ENCODE measurements at regions of chr11 and their contacts with region 1.

Region 1: DNA sequence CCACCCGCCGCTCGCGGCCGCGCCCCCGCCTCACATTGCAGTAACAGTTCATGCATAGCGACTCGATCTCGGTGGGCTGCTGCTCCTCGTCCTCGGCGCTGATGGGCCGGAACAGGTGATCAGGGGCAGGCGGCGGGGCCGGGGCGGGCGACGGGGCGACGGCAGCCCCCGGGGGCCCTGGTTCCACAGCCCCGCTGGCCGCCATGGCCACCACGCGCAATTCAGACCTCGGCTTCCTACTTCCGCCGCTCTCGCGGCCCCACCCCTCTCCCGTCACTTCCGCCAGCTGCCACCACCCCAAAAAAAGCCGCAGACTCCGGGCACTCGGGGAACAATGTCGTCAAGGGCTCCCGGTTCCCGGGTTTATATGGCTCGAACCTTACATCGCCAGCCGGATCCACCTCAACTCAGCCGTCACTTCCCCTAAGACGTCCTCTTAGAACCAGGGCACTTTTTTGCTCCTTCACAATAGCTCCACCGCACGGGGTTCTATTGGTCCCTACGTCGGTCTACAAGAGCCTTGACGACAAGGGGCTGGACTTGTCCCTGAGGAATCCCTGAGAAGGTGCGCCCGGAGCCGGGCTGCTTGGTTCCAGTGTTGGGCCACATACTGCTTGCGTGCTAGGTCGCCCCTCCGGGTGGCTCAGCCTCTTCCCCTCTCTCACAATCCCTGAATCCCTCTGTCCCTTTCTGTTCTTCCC is at the start of gene ZPR1:
- DNase-seq: peak; percentile 55
- H3K4me3 ChIP-seq: peak within 1 kb of the TSS; percentile 61 to 83 (median 81)
- H3K27ac ChIP-seq: peak within 1 kb of the TSS; percentile 75
- H3K4me1 ChIP-seq: peaks cover 14% of the 10 kb centered on the region
- H3K27me3 ChIP-seq: no peaks in the 10 kb centered on the region
- CTCF ChIP-seq: no peak
- total RNA-seq, gene ZPR1: 35.7 to 67.9 TPM

Region 2: DNA sequence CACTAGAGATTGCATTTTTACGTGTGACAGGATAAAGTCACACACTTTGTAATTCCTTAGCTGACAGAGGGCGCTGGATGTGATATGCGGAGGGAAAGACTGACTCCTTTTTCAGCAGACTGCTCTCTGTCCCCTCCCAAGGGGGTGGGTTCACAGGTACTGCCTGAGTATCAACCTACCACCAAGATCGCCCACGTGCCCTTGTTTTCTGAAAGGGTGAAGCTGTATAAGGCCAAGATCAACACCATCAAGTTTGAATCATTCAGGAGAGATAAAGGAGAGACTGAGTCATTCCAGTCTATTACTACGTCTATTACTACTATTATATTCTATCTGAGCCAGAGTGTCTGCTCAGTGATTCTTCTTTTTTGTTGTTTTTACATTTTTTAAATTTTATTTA is 45.8 kb before region 1 on chr11:
- CTCF ChIA-PET with region 1: no interaction called
- dilution Hi-C with region 1: no loop called
- in situ Hi-C with region 1: no loop called
- intact Hi-C with region 1: no loop called
- DNase-seq: no peak
- H3K4me3 ChIP-seq: no peak overlapping the region
- H3K27ac ChIP-seq: no peak overlapping the region
- H3K4me1 ChIP-seq: no peaks in the 10 kb centered on the region
- H3K27me3 ChIP-seq: no peaks in the 10 kb centered on the region
- CTCF ChIP-seq: no peak

Region 3: DNA sequence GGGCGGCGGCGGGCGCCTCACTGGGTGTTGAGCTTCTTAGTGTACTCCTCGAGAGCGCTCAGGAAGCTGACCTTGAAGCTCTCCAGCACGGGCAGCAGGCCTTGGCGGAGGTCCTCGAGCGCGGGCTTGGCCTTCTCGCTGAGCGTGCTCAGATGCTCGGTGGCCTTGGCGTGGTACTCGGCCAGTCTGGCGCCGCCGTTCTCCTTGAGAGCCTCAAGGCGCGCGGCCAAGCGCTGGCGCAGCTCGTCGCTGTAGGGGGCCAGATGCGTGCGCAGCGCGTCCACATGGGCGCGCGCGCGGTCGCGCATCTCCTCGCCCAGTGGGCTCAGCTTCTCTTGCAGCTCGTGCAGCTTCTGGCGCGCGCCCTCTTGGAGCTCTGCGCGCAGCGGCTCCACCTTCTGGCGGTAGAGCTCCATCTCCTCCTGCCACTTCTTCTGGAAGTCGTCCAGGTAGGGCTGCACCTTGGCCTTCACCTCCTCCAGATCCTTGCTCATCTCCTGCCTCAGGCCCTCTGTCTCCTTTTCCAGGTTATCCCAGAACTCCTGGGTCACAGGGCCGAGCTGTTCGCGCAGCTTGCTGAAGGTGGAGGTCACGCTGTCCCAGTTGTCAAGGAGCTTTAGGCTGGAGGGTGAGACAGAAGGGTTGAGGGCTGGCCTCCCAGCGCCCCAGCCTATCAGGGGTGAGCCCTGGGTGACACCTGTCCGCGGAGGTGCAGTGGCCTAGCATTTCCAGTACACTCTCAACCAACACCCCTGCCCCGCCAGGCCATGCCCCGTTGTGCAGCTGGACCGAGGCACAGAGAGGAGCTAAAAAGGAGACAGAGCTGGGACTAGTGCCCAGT is 48.1 kb after region 1 on chr11:
- CTCF ChIA-PET with region 1: interaction called, 26 read pairs
- dilution Hi-C with region 1: no loop called
- in situ Hi-C with region 1: no loop called
- intact Hi-C with region 1: loop called (anchors 1 kb)
- DNase-seq: peak; percentile 85
- H3K4me3 ChIP-seq: peak overlapping the region in 2 of 3 experiments; percentile 34 to 51
- H3K27ac ChIP-seq: no peak overlapping the region
- H3K4me1 ChIP-seq: peaks cover 8% of the 10 kb centered on the region
- H3K27me3 ChIP-seq: no peaks in the 10 kb centered on the region
- CTCF ChIP-seq: peak; percentile 58 to 74

Region 4: GRCh38 chr11:116853461-116854073 is 65.6 kb after region 1 on chr11:
- CTCF ChIA-PET with region 1: interaction called, 6 read pairs
- dilution Hi-C with region 1: no loop called
- in situ Hi-C with region 1: no loop called
- intact Hi-C with region 1: loop called (anchors 5 kb)
- DNase-seq: peak; percentile 96
- H3K4me3 ChIP-seq: no peak overlapping the region
- H3K27ac ChIP-seq: peak overlapping the region; percentile 92
- H3K4me1 ChIP-seq: peaks cover 36% of the 10 kb centered on the region
- H3K27me3 ChIP-seq: no peaks in the 10 kb centered on the region
- CTCF ChIP-seq: no peak

Measured in mammary epithelial cell (primary cell).